ENCODE measurements at regions of chr2 and their contacts with region 1.

Region 1: GRCh38 chr2:98713332-98714015 is 17.5 kb downstream of the MGAT4A start:
- DNase-seq: no peak
- ATAC-seq: no peak
- H3K4me3 ChIP-seq: no peak overlapping the region
- H3K4me3 Mint-ChIP-seq: peak overlapping the region; percentile 22
- H3K27ac ChIP-seq: no peak overlapping the region
- H3K27ac Mint-ChIP-seq: peak overlapping the region; percentile 92
- H3K4me1 ChIP-seq: peaks cover 95% of the 10 kb centered on the region
- H3K4me1 Mint-ChIP-seq: peaks cover 96% of the 10 kb centered on the region
- H3K27me3 ChIP-seq: no peaks in the 10 kb centered on the region
- H3K27me3 Mint-ChIP-seq: no peaks in the 10 kb centered on the region
- CTCF ChIP-seq: no peak

Region 2: GRCh38 chr2:98654699-98655495 is 58.6 kb before region 1 on chr2:
- CTCF ChIA-PET with region 1: interaction called, 10 read pairs
- POLR2A ChIA-PET with region 1: interaction called, 5 read pairs
- intact Hi-C with region 1: no loop called
- DNase-seq: peak in 5 of 9 experiments; percentile 43 to 90 (median 75)
- ATAC-seq: peak; percentile 51
- H3K4me3 ChIP-seq: no peak overlapping the region
- H3K4me3 Mint-ChIP-seq: peak overlapping the region; percentile 69
- H3K27ac ChIP-seq: peak overlapping the region; percentile 77 to 80
- H3K27ac Mint-ChIP-seq: peak overlapping the region; percentile 99
- H3K4me1 ChIP-seq: peaks cover 92% of the 10 kb centered on the region
- H3K4me1 Mint-ChIP-seq: peaks cover 84% of the 10 kb centered on the region
- H3K27me3 ChIP-seq: no peaks in the 10 kb centered on the region
- H3K27me3 Mint-ChIP-seq: no peaks in the 10 kb centered on the region
- CTCF ChIP-seq: no peak

Region 3: DNA sequence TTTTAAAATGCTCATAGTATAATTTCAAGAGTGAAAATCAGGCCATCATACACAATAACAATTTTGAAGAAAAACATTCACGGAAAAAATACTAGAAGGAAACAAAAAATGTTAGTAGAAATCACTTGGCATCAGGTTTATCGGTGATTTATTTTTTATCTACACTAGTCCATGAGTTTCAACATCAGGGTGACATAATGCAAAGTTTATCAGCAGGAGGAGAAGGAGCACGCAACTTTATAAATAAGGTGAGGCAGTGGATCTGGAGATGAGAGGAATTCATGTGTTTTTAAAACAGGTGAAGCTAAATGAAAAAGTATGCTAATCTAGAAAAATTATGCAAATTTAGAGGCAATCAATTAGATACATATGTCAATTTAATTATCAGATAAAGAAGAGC is 36.7 kb before region 1 on chr2:
- CTCF ChIA-PET with region 1: no interaction called
- POLR2A ChIA-PET with region 1: no interaction called
- intact Hi-C with region 1: loop called in 1 of 2 experiments (anchors 5 kb)
- DNase-seq: no peak
- ATAC-seq: no peak
- H3K4me3 ChIP-seq: no peak overlapping the region
- H3K4me3 Mint-ChIP-seq: no peak overlapping the region
- H3K27ac ChIP-seq: no peak overlapping the region
- H3K27ac Mint-ChIP-seq: peak overlapping the region; percentile 64
- H3K4me1 ChIP-seq: peaks cover 5% of the 10 kb centered on the region
- H3K4me1 Mint-ChIP-seq: peaks cover 57% of the 10 kb centered on the region
- H3K27me3 ChIP-seq: no peaks in the 10 kb centered on the region
- H3K27me3 Mint-ChIP-seq: no peaks in the 10 kb centered on the region
- CTCF ChIP-seq: no peak

Region 4: GRCh38 chr2:98702127-98702802 is 11.2 kb before region 1 on chr2:
- CTCF ChIA-PET with region 1: interaction called, 4 read pairs
- POLR2A ChIA-PET with region 1: interaction called, 5 read pairs
- intact Hi-C with region 1: loop called in 1 of 2 experiments (anchors 2 kb)
- DNase-seq: no peak
- ATAC-seq: peak; percentile 39
- H3K4me3 ChIP-seq: no peak overlapping the region
- H3K4me3 Mint-ChIP-seq: peak overlapping the region; percentile 64
- H3K27ac ChIP-seq: peak overlapping the region; percentile 11 to 30
- H3K27ac Mint-ChIP-seq: peak overlapping the region; percentile 92
- H3K4me1 ChIP-seq: peaks cover 74% of the 10 kb centered on the region
- H3K4me1 Mint-ChIP-seq: peaks cover 79% of the 10 kb centered on the region
- H3K27me3 ChIP-seq: no peaks in the 10 kb centered on the region
- H3K27me3 Mint-ChIP-seq: no peaks in the 10 kb centered on the region
- CTCF ChIP-seq: no peak

Region 5: DNA sequence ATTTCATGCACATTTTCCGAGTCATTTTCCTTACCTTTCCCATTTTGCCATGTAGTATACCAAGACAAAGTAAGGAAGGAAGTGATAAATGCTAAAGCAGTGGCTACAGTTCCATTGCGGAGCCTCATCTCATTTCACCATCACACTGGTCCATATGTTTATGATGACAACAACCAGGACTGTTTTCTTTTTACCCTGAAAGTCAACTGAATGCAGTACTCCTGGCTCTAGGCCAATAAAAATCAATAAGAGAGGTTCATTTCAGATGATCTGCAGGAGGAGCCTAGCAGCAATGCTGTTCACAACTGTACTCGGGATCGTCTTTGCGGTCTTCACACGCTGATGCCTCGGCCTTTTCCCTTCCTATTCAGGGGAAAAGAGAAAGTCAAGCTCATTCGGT is 12.7 kb after region 1 on chr2:
- CTCF ChIA-PET with region 1: interaction called, 4 read pairs
- POLR2A ChIA-PET with region 1: interaction called, 5 read pairs
- intact Hi-C with region 1: loop called in 1 of 2 experiments (anchors 1 kb)
- DNase-seq: peak in 2 of 9 experiments; percentile 37 to 43
- ATAC-seq: no peak
- H3K4me3 ChIP-seq: peak overlapping the region; percentile 31 to 32
- H3K4me3 Mint-ChIP-seq: peak overlapping the region; percentile 77
- H3K27ac ChIP-seq: peak overlapping the region in 1 of 2 experiments; percentile 47
- H3K27ac Mint-ChIP-seq: peak overlapping the region; percentile 86
- H3K4me1 ChIP-seq: peaks cover 56% of the 10 kb centered on the region
- H3K4me1 Mint-ChIP-seq: peaks cover 67% of the 10 kb centered on the region
- H3K27me3 ChIP-seq: no peaks in the 10 kb centered on the region
- H3K27me3 Mint-ChIP-seq: no peaks in the 10 kb centered on the region
- CTCF ChIP-seq: no peak

Measured in CD8-positive, alpha-beta T cell (primary cell).